ENCODE measurements at regions of chr12 and their contacts with region 1.

Region 1: GRCh38 chr12:126784328-126784921 is 1482.5 kb upstream of the TMEM132C start:
- DNase-seq: peak in 2 of 5 donors; percentile 20 to 36
- ATAC-seq: no peak
- H3K4me3 ChIP-seq: no peak overlapping the region
- H3K27ac ChIP-seq: no peak overlapping the region
- H3K4me1 ChIP-seq: no peaks in the 10 kb centered on the region
- H3K27me3 ChIP-seq: peaks cover 0 to 4% (median 0%) of the 10 kb centered on the region in 9 donors
- CTCF ChIP-seq: peak in 11 of 12 donors; percentile 32 to 58 (median 42)
- POLR2A ChIP-seq: no peak

Region 2: DNA sequence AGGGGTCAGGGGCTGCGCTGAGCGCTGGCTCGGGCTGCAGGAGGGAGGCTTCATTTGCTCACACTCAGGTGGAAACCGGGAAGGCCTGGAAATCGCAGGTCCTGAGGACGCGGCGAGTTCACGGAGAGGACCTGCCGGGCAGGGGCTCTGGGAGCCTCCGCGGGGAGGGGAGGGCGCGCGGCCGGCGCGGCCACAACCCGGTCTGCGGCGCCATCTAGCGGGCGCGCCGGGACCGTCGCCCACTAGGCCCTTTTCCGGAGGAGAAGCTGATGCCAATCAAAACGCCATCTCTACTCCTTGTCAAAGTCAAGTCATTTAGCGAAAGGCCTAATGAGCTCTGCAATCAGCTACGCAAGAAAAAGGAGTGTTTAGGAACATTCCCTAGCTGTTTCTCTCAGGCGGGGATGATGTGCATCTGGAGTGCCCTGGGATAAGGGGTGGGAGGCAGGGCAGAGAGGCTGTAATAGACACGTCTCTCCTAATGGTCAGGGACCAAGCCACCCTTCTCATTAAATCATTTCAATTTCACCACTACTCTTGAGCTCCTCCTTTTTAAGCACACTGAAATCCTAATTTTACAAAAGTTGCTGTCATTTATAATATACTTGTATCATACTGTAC is 596.7 kb after region 1 on chr12:
- intact Hi-C with region 1: loop called in 2 of 10 experiments (anchors 5 to 10 kb)
- DNase-seq: peak in 3 of 5 donors; percentile 9 to 29 (median 20)
- ATAC-seq: peak in 2 of 4 donors; percentile 68 to 77
- H3K4me3 ChIP-seq: peak overlapping the region in 4 of 12 donors; percentile 17 to 40 (median 28)
- H3K27ac ChIP-seq: no peak overlapping the region
- H3K4me1 ChIP-seq: peaks cover 0 to 6% (median 0%) of the 10 kb centered on the region in 12 donors
- H3K27me3 ChIP-seq: peaks cover 0 to 23% (median 0%) of the 10 kb centered on the region in 9 donors
- CTCF ChIP-seq: peak; percentile 68 to 87 (median 80)
- POLR2A ChIP-seq: no peak

Measured in heart left ventricle (tissue), 16 donors.